GM13976 (cell line): ENCODE measurements at regions of chr4 and their contacts with region 1.

Region 1: GRCh38 chr4:120399826-120400225 is 333.2 kb upstream of the MAD2L1 start:
- DNase-seq: no peak
- CTCF ChIP-seq: no peak

Region 2: DNA sequence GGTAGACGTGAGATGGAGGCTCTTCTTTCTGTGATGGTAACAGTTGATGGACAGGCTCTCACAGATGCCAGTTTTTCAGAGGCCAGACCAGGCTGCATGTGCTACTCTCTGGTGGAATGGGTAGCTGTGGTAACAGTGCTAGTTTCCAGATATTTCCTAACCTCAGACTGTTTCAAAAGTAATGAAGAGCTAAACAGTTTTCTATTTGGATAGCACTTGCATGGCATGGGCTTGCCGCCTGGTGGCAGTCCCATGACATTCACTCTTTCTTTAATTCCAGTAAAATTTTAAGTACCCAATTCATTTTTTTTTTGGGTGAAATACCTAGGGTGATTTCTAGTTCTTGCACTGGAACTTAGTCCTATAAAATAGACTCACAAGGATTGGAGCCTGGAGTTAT is 113.0 kb before region 1 on chr4:
- in situ Hi-C with region 1: loop called (anchors 25 kb)
- DNase-seq: no peak
- CTCF ChIP-seq: no peak